Stomach (tissue), 19 donors: ENCODE measurements at regions of chr4 and their contacts with region 1.

Region 1: DNA sequence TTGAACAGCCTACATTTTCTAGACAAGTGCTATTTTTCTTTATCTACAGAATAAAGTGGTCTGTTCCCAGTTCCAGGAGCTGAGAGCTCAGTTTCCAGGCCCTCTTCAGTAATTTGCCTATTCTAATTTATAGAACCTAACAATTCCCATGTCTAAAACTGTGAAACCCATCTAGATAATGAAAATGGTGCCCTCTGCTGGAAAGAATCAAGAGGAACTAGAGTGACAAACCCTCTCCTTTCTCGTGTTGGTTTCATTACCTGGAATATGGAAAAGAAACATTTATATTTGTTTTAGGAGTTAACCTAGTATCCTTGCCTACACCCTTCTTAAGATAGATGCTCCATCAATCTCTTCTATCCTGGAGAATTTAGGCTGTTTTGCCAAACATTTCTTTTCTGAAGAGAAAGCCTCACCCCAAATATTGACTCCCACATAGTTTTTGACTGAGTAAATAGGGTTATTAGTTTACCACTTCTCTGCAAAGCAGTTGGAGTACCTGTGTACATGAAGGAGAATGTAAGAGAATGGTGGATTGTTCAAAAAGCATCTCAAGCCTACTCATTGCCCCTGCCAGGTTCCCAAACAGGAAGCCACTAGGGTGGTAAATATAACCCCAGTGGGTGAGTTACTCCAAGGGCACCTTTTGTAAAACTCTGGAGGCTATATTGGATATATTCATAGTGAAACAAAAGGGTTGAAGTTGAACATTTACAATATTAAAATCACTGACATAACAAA is 121.6 kb downstream of the RASL11B start:
- DNase-seq: peak in 1 of 2 donors; percentile 81
- H3K4me3 ChIP-seq: no peak overlapping the region
- H3K27ac ChIP-seq: peak overlapping the region in 2 of 5 donors; percentile 40 to 45
- H3K4me1 ChIP-seq: peaks cover 4 to 26% (median 19%) of the 10 kb centered on the region in 4 donors
- H3K27me3 ChIP-seq: no peaks in the 10 kb centered on the region
- CTCF ChIP-seq: peak in 5 of 7 experiments; percentile 29 to 70 (median 54)
- EP300 ChIP-seq: no peak
- POLR2A ChIP-seq: no peak

Region 2: GRCh38 chr4:52477191-52477780 is 506.4 kb before region 1 on chr4:
- intact Hi-C with region 1: no loop called
- DNase-seq: peak in 1 of 2 donors; percentile 26
- H3K4me3 ChIP-seq: no peak overlapping the region
- H3K27ac ChIP-seq: no peak overlapping the region
- H3K4me1 ChIP-seq: no peaks in the 10 kb centered on the region
- H3K27me3 ChIP-seq: no peaks in the 10 kb centered on the region
- CTCF ChIP-seq: no peak
- EP300 ChIP-seq: no peak
- POLR2A ChIP-seq: no peak

Region 3: DNA sequence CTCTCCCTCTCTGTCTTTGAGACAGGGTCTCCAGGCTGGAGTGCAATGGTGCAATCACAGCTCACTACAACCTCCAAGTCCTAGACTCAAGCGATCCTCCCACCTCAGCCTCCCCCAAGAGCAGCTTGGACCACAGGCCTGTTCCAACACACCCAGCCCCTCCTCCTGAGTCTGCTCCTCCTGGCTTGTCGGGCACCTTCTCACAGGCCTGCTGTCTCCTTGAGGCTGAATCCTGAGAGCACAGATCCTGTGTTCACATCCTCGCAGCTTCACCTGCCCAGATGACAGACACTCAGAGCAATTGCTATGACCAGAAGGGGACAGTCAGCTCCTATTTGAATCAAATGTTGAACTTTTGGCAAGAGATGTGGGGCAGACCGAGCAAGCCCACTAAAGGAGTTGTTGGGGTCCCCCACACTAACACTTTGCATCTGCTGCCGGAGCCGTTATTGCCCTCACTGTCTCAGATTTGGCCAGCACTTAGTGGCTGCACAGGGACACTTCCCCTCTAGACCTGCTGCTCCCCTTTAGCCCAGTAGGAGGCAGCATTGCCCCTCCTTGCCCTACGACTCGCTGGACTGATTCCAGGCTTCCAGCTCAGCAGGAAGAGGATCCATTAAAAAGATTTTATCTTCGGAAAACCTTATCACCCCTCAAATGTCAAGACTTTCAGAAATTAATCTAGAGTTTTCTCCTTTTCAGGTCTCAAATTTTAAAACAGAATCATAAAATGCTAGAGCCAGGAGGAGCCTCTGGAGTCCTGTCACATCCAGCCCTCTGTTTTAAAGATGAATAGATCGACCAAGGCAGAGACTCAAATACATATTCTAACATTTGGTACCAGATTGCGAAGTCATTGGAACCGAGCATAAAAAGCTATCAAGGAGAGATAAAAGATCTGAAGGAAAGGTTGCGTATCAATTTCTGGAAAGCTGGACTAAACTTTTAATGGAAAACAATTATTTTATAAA is 438.3 kb before region 1 on chr4:
- intact Hi-C with region 1: loop called (anchors 5 kb)
- DNase-seq: peak; percentile 85 to 88
- H3K4me3 ChIP-seq: no peak overlapping the region
- H3K27ac ChIP-seq: no peak overlapping the region
- H3K4me1 ChIP-seq: peaks cover 0 to 8% (median 3%) of the 10 kb centered on the region in 4 donors
- H3K27me3 ChIP-seq: no peaks in the 10 kb centered on the region
- CTCF ChIP-seq: peak in 5 of 7 experiments; percentile 78 to 89 (median 87)
- EP300 ChIP-seq: no peak
- POLR2A ChIP-seq: no peak

Region 4: DNA sequence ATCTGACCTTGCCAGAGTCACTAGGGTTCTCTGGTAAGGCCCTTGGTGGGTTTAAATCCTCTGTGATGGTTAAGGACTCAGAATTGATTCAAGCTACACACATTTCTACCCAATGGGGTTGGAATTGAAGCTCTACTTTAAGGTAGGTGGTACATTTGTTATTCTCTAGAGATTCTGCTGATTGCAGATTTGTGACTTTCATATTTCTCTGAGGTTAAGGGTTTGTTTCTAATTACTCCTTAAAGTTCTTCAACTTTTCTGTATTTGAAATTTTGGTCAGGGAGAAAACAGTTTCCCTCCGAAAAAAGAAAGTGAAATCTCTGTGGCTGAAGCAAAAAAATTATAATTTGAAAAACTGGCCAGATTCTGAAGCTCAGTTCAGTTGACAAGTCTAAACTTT is 298.8 kb before region 1 on chr4:
- intact Hi-C with region 1: no loop called
- DNase-seq: no peak
- H3K4me3 ChIP-seq: no peak overlapping the region
- H3K27ac ChIP-seq: no peak overlapping the region
- H3K4me1 ChIP-seq: no peaks in the 10 kb centered on the region
- H3K27me3 ChIP-seq: no peaks in the 10 kb centered on the region
- CTCF ChIP-seq: no peak
- EP300 ChIP-seq: no peak
- POLR2A ChIP-seq: no peak

Region 5: GRCh38 chr4:52904421-52904820 is 79.3 kb before region 1 on chr4:
- intact Hi-C with region 1: no loop called
- DNase-seq: no peak
- H3K4me3 ChIP-seq: no peak overlapping the region
- H3K27ac ChIP-seq: no peak overlapping the region
- H3K4me1 ChIP-seq: no peaks in the 10 kb centered on the region
- H3K27me3 ChIP-seq: no peaks in the 10 kb centered on the region
- CTCF ChIP-seq: no peak
- EP300 ChIP-seq: no peak
- POLR2A ChIP-seq: no peak

Region 6: GRCh38 chr4:53059256-53059655 is 75.5 kb after region 1 on chr4:
- intact Hi-C with region 1: no loop called
- DNase-seq: no peak
- H3K4me3 ChIP-seq: no peak overlapping the region
- H3K27ac ChIP-seq: no peak overlapping the region
- H3K4me1 ChIP-seq: no peaks in the 10 kb centered on the region
- H3K27me3 ChIP-seq: no peaks in the 10 kb centered on the region
- CTCF ChIP-seq: no peak
- EP300 ChIP-seq: no peak
- POLR2A ChIP-seq: no peak